Activated CD4-positive, alpha-beta memory T cell treated with anti-CD3 and anti-CD28 coated beads, Interleukin-2, amount 10 ng/mL, durations not matched to agents 7 days and 5 days (primary cell): ENCODE measurements at regions of chr5 and their contacts with region 1.

Region 1: GRCh38 chr5:65562731-65563701 is at the starts of genes CENPK and PPWD1:
- DNase-seq: peak; percentile 97
- H3K4me3 Mint-ChIP-seq: peak within 1 kb of the TSS; percentile 93
- H3K27ac Mint-ChIP-seq: peak within 1 kb of the TSS; percentile 98
- H3K4me1 Mint-ChIP-seq: peaks cover 58% of the 10 kb centered on the region
- H3K27me3 Mint-ChIP-seq: no peaks in the 10 kb centered on the region
- total RNA-seq, gene CENPK: 86.0 to 88.7 TPM
- total RNA-seq, gene PPWD1: 46.7 to 50.0 TPM

Region 2: GRCh38 chr5:65102828-65103711 is 459.9 kb before region 1 on chr5:
- CTCF ChIA-PET with region 1: no interaction called
- POLR2A ChIA-PET with region 1: interaction called, 14 read pairs
- DNase-seq: peak; percentile 44
- H3K4me3 Mint-ChIP-seq: peak overlapping the region; percentile 69
- H3K27ac Mint-ChIP-seq: no peak overlapping the region
- H3K4me1 Mint-ChIP-seq: peaks cover 35% of the 10 kb centered on the region
- H3K27me3 Mint-ChIP-seq: peaks cover 23% of the 10 kb centered on the region

Region 3: DNA sequence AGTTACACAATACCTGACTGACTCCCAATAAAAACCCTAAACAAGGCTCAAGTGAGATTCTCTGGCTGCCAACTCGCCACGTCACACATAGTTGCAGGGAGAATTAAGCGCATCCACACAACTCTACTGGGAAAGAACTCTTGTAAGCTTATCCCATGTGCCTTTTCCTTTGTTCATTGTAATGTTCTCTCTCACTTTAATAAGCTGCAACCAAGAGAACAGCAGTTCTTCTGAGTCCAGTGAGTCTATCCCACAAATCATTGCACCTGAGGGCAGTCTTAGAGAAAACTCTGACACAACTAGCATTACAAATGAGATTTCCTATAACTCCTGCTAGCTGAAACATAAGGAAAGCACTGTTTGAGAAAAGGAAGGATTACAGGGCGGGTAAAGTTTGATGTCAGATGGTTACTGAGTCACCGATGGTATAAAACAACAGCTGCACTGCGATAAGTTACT is 27.5 kb before region 1 on chr5:
- CTCF ChIA-PET with region 1: no interaction called
- POLR2A ChIA-PET with region 1: interaction called, 13 read pairs
- DNase-seq: no peak
- H3K4me3 Mint-ChIP-seq: no peak overlapping the region
- H3K27ac Mint-ChIP-seq: no peak overlapping the region
- H3K4me1 Mint-ChIP-seq: peaks cover 2% of the 10 kb centered on the region
- H3K27me3 Mint-ChIP-seq: no peaks in the 10 kb centered on the region

Region 4: DNA sequence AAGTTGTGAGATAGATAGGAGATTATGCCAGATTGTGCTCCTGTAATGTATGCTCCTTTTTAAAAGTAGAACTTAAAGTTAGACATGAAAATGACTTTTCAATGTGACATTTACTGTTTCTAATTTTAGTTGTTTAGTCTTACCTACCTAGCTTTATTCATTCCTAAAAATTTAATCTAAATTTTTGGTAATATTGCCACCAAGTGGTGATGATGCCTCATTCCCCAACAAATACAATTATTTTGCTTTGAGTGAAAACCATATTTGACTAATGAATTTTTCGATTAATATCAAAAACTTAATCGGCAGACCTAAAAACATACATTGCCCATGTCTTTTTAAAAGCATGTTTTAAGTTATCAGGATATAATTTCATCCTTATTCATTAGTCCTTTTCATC is 25.7 kb after region 1 on chr5:
- CTCF ChIA-PET with region 1: no interaction called
- POLR2A ChIA-PET with region 1: interaction called, 21 read pairs
- DNase-seq: no peak
- H3K4me3 Mint-ChIP-seq: no peak overlapping the region
- H3K27ac Mint-ChIP-seq: no peak overlapping the region
- H3K4me1 Mint-ChIP-seq: no peaks in the 10 kb centered on the region
- H3K27me3 Mint-ChIP-seq: no peaks in the 10 kb centered on the region

Region 5: GRCh38 chr5:65727491-65728156 is 164.6 kb after region 1 on chr5:
- CTCF ChIA-PET with region 1: interaction called, 12 read pairs
- POLR2A ChIA-PET with region 1: interaction called, 4 read pairs
- DNase-seq: no peak
- H3K4me3 Mint-ChIP-seq: no peak overlapping the region
- H3K27ac Mint-ChIP-seq: no peak overlapping the region
- H3K4me1 Mint-ChIP-seq: peaks cover 17% of the 10 kb centered on the region
- H3K27me3 Mint-ChIP-seq: no peaks in the 10 kb centered on the region